Psoas muscle (tissue), 8 donors: ENCODE measurements at regions of chr10 and their contacts with region 1.

Region 1: GRCh38 chr10:24209946-24210491 is 1.1 kb downstream of the KIAA1217 start:
- DNase-seq: peak in 1 of 2 donors; percentile 20
- ATAC-seq: peak in 2 of 4 donors; percentile 6 to 10
- H3K4me3 ChIP-seq: peak overlapping the region; percentile 67
- H3K27ac ChIP-seq: peak overlapping the region; percentile 93
- H3K4me1 ChIP-seq: peaks cover 57% of the 10 kb centered on the region
- H3K27me3 ChIP-seq: no peaks in the 10 kb centered on the region
- CTCF ChIP-seq: no peak

Region 2: DNA sequence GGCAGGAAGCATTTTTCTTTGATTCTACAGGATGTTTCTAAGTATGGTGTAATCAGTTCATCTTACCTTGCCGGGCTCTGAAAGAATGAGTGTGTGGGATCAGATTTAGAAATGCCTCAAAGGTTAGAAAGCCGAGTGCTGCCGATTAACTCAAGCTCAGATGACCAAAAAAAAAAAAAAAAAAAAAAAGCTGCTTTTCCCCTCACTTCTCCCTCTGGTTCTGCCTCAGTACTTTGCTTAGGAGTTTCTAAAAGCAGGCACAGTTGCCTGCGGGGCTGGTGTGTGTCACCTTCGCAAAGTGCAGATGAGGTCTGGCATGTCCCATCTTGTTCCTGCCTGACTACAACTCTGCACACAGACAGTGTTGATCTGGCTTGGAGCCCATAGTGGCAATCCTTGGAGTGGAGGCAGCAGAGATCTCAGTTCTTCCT is 45.9 kb after region 1 on chr10:
- intact Hi-C with region 1: loop called (anchors 5 kb)
- DNase-seq: peak; percentile 57 to 78
- ATAC-seq: peak; percentile 69 to 86 (median 74)
- H3K4me3 ChIP-seq: peak overlapping the region; percentile 44
- H3K27ac ChIP-seq: peak overlapping the region; percentile 87
- H3K4me1 ChIP-seq: peaks cover 82% of the 10 kb centered on the region
- H3K27me3 ChIP-seq: no peaks in the 10 kb centered on the region
- CTCF ChIP-seq: no peak

Region 3: DNA sequence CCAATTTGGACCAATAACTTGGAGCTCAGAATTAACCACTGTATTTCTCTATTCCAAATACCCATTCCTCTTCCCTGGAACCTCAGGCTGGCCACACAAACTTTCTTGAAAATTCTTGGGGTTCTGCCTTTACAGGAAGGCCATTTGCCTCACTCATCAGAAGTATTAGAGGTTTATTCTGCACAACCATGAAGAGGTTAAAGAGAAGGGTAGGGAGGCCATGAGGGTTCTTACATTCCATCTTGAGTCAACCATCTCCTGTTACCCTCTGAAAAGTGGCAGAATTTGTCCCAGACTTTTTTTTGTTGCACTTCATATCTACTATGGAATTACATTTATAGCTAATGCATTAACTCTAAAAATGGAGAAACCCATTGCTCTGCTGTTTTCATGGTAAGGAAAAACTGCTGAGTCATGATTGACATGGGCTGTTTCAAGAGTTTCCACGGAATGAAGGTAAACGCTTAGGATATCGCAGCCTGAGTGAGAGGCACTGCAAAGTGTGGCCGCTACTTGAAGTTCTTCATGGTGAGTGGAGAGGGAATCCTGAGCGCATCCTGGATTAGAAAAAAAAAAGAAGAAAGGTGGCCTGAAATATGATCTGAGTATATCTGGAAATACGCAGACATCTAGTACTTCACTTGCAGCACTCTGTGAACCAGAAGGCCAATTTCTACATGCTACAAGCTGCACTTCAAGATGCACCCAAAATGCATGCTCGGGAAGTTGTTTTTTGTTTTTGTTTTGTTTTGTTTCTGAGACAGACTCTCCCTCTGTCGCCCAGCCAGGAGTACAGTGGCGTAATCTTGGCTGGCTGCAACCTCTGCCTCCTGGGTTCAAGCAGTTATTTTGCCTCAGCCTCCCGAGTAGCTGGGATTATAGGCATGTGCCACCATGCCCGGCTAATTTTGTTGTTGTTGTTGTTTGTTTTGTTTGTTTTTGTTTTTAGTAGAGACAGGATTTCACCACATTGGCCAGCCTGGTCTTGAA is 82.6 kb after region 1 on chr10:
- intact Hi-C with region 1: loop called in 1 of 2 experiments (anchors 5 kb)
- DNase-seq: peak in 1 of 2 donors; percentile 79
- ATAC-seq: peak; percentile 12 to 47 (median 20)
- H3K4me3 ChIP-seq: no peak overlapping the region
- H3K27ac ChIP-seq: peak overlapping the region; percentile 82
- H3K4me1 ChIP-seq: peaks cover 30% of the 10 kb centered on the region
- H3K27me3 ChIP-seq: no peaks in the 10 kb centered on the region
- CTCF ChIP-seq: no peak

Region 4: GRCh38 chr10:24383681-24384106 is 173.7 kb after region 1 on chr10:
- intact Hi-C with region 1: loop called in 1 of 2 experiments (anchors 2 kb)
- DNase-seq: peak; percentile 93 to 97
- ATAC-seq: peak; percentile 89 to 93 (median 91)
- H3K4me3 ChIP-seq: peak overlapping the region; percentile 21
- H3K27ac ChIP-seq: peak overlapping the region; percentile 89
- H3K4me1 ChIP-seq: peaks cover 45% of the 10 kb centered on the region
- H3K27me3 ChIP-seq: no peaks in the 10 kb centered on the region
- CTCF ChIP-seq: peak; percentile 54